ENCODE measurements at regions of chrX and their contacts with region 1.

Region 1: GRCh38 chrX:50680990-50681389 is 133.0 kb downstream of the SHROOM4 start:
- DNase-seq: no peak
- ATAC-seq: no peak

Region 2: DNA sequence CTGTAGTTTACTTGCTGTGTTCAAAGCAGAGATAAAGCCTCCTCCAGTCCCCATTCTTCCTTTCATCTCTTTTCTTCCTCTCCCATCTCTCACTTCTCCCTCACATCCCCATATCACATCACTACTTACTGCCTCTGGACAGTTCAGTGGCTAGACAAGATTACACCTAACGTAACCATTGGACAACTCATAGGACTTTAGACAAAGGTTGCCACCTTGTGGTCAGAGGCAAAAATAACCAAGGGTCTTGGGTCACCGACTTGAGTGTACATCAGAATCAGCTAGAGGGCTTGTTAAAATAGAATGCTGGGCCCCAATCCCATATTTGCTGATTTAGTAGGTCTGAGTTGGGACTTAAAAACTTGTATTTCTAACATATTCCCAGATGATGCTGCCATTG is 101.0 kb before region 1 on chrX:
- intact Hi-C with region 1: loop called (anchors 5 kb)
- DNase-seq: no peak
- ATAC-seq: no peak

Region 3: DNA sequence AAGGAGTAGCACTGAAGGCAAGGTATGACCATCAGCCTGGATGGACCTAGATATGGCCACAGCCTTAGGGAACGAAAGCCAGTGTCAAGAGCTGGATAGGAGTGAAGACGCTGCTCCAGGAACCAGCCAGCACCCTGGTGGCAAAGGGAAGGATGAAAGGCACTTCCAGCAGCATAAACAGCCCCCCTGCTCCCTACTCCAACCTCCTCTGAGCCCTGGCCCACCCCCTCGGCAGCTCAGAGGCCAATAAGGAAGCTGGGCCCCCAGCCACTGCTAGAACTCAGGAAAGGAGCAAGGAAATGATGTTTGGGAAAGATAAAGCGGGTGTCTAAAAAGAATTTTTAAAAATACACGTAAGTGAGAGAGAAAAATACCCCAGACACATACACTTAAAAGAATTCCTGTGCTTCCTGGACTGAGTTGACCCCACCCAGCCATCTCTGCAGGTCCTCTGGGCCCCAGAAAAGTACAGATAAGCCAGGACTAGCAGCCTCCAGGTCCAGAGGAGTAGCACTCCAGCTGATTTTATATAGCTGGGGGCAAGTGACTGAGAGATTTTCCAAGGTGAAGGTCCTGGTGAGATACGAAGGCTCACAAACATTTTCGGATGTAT is 37.4 kb before region 1 on chrX:
- intact Hi-C with region 1: loop called (anchors 5 kb)
- DNase-seq: peak; percentile 67
- ATAC-seq: no peak

Measured in Right ventricle myocardium inferior (tissue), 1 donor.